Caco-2 (cell line): ENCODE measurements at regions of chr14 and their contacts with region 1.

Region 1: DNA sequence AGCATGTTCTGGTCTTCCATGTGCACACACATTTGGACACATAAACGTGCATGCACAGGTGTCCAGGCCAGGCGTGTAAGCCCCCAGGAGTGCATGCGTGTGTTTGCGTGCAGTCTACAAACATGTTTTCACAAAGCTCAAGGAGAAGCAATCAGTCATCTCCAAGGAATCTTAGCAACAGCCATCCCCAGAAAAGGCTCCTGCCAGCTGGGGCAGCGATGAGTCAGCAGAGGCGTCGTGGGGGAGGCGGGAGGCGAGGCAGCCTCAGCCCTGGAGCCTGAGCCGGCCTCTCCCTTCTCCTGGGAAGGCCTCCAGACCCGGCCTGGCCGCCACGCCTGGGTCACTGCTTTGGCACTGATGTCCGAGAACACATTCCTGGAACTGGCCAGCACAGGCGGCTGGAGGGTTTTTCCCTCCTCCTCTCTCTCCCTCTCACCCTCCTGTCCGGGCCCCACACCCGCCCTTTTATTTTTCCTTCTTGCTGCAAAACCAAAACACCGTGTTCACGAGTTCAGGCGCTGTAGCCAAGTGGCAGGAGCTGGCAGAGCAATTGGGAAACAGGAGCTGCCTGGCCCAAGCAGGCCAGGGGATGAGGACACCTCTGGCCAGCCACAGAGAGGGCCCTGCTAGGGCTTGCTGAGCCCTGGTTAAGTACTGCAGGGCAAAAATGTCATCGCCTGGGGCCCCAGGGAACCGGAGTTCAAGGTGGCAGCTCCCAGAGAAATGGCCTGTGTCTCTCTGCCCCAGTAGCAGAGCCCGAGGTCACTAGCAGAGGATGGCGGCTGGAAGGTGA is 92.7 kb downstream of the LRRC74A start:
- DNase-seq: peak; percentile 70 to 75
- H3K4me3 ChIP-seq: no peak overlapping the region
- H3K4me3 Mint-ChIP-seq: no peak overlapping the region
- H3K27ac Mint-ChIP-seq: peak overlapping the region; percentile 82
- H3K4me1 ChIP-seq: peaks cover 25% of the 10 kb centered on the region
- H3K4me1 Mint-ChIP-seq: peaks cover 20% of the 10 kb centered on the region
- H3K27me3 ChIP-seq: no peaks in the 10 kb centered on the region
- H3K27me3 Mint-ChIP-seq: no peaks in the 10 kb centered on the region
- CTCF ChIP-seq: peak in 1 of 2 experiments; percentile 39

Region 2: DNA sequence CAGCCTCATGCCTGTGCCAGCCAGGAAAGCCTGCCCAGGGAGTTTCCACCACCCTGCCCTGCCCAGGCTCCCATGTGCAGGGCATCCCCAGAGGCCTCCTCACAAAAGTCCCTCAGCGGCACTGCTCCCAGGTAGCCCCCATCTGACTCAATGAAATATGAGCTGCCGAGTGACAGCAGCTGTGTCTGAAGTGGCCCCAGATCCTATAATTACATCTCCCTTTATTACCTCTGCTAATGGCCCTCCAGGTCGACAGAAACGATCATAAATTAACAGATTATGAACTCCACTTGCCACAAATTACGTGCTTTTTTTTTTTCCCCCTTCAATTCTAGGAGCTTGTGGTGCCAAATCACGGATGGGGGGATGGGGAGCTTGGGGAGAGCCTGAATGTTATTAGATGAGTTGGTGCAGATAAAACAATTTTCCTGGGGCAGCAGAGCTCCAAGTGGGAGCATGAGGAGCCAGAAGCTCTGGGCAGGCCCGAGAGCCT is 432.6 kb before region 1 on chr14:
- CTCF ChIA-PET with region 1: no interaction called
- POLR2A ChIA-PET with region 1: no interaction called
- intact Hi-C with region 1: no loop called
- DNase-seq: no peak
- H3K4me3 ChIP-seq: no peak overlapping the region
- H3K4me3 Mint-ChIP-seq: no peak overlapping the region
- H3K27ac Mint-ChIP-seq: no peak overlapping the region
- H3K4me1 ChIP-seq: no peaks in the 10 kb centered on the region
- H3K4me1 Mint-ChIP-seq: no peaks in the 10 kb centered on the region
- H3K27me3 ChIP-seq: no peaks in the 10 kb centered on the region; the same call in 1 of the 2 replicates
- H3K27me3 Mint-ChIP-seq: peaks cover 19% of the 10 kb centered on the region
- CTCF ChIP-seq: no peak

Region 3: DNA sequence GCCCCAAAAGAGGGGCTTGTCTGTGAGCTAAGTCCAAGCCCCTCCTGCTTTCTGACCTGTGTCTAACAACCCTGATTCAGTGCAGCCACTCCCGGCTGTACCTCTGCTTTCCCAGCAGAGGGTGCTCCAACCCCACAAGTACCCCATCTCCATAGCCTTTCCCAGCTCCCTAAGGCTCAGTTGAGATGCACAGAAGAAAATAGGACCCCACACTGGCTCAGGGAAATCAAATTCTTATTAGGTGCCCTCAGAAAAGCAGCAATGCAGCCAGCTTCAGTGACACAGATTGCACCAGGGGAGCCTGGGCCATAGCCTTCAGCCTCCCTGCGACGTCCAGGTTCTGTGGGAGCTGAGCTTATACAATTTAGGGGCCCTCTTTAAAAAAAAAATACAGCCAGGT is 42.9 kb before region 1 on chr14:
- CTCF ChIA-PET with region 1: interaction called, 8 read pairs
- POLR2A ChIA-PET with region 1: no interaction called
- intact Hi-C with region 1: loop called (anchors 1 kb)
- DNase-seq: peak; percentile 63 to 71
- H3K4me3 ChIP-seq: no peak overlapping the region
- H3K4me3 Mint-ChIP-seq: no peak overlapping the region
- H3K27ac Mint-ChIP-seq: no peak overlapping the region
- H3K4me1 ChIP-seq: no peaks in the 10 kb centered on the region
- H3K4me1 Mint-ChIP-seq: no peaks in the 10 kb centered on the region
- H3K27me3 ChIP-seq: no peaks in the 10 kb centered on the region
- H3K27me3 Mint-ChIP-seq: no peaks in the 10 kb centered on the region
- CTCF ChIP-seq: peak; percentile 86 to 94

Region 4: GRCh38 chr14:76962303-76962660 is 43.3 kb after region 1 on chr14:
- CTCF ChIA-PET with region 1: interaction called, 3 read pairs
- POLR2A ChIA-PET with region 1: no interaction called
- intact Hi-C with region 1: loop called (anchors 10 kb)
- DNase-seq: no peak
- H3K4me3 ChIP-seq: peak overlapping the region; percentile 24
- H3K4me3 Mint-ChIP-seq: peak overlapping the region; percentile 88
- H3K27ac Mint-ChIP-seq: peak overlapping the region; percentile 84
- H3K4me1 ChIP-seq: peaks cover 25% of the 10 kb centered on the region
- H3K4me1 Mint-ChIP-seq: peaks cover 20% of the 10 kb centered on the region
- H3K27me3 ChIP-seq: no peaks in the 10 kb centered on the region
- H3K27me3 Mint-ChIP-seq: no peaks in the 10 kb centered on the region
- CTCF ChIP-seq: no peak

Region 5: GRCh38 chr14:77007975-77008421 is 89.1 kb after region 1 on chr14:
- CTCF ChIA-PET with region 1: no interaction called
- POLR2A ChIA-PET with region 1: no interaction called
- intact Hi-C with region 1: loop called (anchors 5 kb)
- DNase-seq: peak; percentile 75 to 82
- H3K4me3 ChIP-seq: no peak overlapping the region
- H3K4me3 Mint-ChIP-seq: peak overlapping the region; percentile 44
- H3K27ac Mint-ChIP-seq: peak overlapping the region; percentile 86
- H3K4me1 ChIP-seq: peaks cover 61% of the 10 kb centered on the region
- H3K4me1 Mint-ChIP-seq: peaks cover 72% of the 10 kb centered on the region
- H3K27me3 ChIP-seq: no peaks in the 10 kb centered on the region
- H3K27me3 Mint-ChIP-seq: no peaks in the 10 kb centered on the region
- CTCF ChIP-seq: no peak

Region 6: GRCh38 chr14:77053046-77053841 is 134.3 kb after region 1 on chr14:
- CTCF ChIA-PET with region 1: no interaction called
- POLR2A ChIA-PET with region 1: no interaction called
- intact Hi-C with region 1: loop called (anchors 1 kb)
- DNase-seq: peak; percentile 79 to 84
- H3K4me3 ChIP-seq: no peak overlapping the region
- H3K4me3 Mint-ChIP-seq: no peak overlapping the region
- H3K27ac Mint-ChIP-seq: no peak overlapping the region
- H3K4me1 ChIP-seq: peaks cover 6% of the 10 kb centered on the region; the same call in 1 of the 2 replicates
- H3K4me1 Mint-ChIP-seq: no peaks in the 10 kb centered on the region
- H3K27me3 ChIP-seq: no peaks in the 10 kb centered on the region
- H3K27me3 Mint-ChIP-seq: no peaks in the 10 kb centered on the region
- CTCF ChIP-seq: peak; percentile 93 to 94

Region 7: GRCh38 chr14:77067632-77068514 is 148.9 kb after region 1 on chr14:
- CTCF ChIA-PET with region 1: interaction called, 10 read pairs
- POLR2A ChIA-PET with region 1: no interaction called
- intact Hi-C with region 1: no loop called
- DNase-seq: peak; percentile 65 to 82
- H3K4me3 ChIP-seq: no peak overlapping the region
- H3K4me3 Mint-ChIP-seq: no peak overlapping the region
- H3K27ac Mint-ChIP-seq: no peak overlapping the region
- H3K4me1 ChIP-seq: no peaks in the 10 kb centered on the region
- H3K4me1 Mint-ChIP-seq: no peaks in the 10 kb centered on the region
- H3K27me3 ChIP-seq: no peaks in the 10 kb centered on the region
- H3K27me3 Mint-ChIP-seq: no peaks in the 10 kb centered on the region
- CTCF ChIP-seq: peak; percentile 87 to 94